Aorta (tissue), 5 donors: ENCODE measurements at regions of chr11 and their contacts with region 1.

Region 1: GRCh38 chr11:57530596-57531507 is at the start of gene TIMM10:
- DNase-seq: peak; percentile 96 to 97
- ATAC-seq: peak; percentile 96
- H3K4me3 ChIP-seq: peak within 1 kb of the TSS; percentile 62 to 63
- H3K27ac ChIP-seq: no peak within 1 kb of the TSS
- H3K4me1 ChIP-seq: no peaks in the 10 kb centered on the region
- H3K27me3 ChIP-seq: no peaks in the 10 kb centered on the region
- total RNA-seq, gene TIMM10: 30.8 to 40.0 TPM

Region 2: DNA sequence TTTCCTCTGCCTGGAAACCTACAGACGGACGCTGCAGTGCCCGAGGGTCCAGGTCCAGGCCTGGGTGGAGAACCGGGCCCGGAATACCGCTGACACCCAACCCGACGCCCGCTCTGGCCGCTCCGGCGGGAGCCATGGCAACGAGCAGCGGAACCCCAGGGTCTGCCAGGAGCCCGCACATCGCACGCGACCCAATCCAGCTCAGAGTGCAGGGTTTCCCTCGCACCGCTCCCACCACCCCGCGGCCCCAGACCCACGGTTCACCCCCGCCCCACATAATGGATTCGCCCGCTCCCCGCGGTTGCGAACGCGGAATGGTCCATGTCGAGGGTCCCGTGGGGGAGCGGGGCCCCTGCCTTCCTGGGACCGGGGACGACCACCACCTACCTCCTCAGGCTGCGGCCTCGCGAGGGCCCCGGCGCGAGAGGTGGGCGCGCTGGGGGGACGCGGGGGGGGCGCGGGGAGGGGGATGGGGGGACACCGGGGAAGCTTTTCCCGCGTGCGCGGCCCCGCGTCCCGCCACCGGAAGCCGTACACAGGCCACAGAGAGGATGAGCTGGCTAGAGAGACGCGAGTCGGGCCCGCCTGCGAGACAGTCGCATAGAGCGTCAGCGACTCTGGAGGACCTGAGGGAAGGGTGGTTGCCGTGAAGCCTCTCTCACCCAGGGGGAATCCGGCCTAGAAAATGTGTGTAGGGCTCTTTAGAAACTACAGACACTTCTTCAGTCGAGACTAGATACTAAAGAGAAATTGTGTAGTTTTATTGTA is 195.3 kb before region 1 on chr11 and contains the start of gene SSRP1:
- intact Hi-C with region 1: loop called (anchors 5 kb)
- DNase-seq: peak; percentile 93 to 95
- ATAC-seq: peak; percentile 95
- H3K4me3 ChIP-seq: peak within 1 kb of the TSS; percentile 60 to 98
- H3K27ac ChIP-seq: peak within 1 kb of the TSS in 1 of 2 donors; percentile 62
- H3K4me1 ChIP-seq: peaks cover 0 to 2% of the 10 kb centered on the region in 2 donors
- H3K27me3 ChIP-seq: no peaks in the 10 kb centered on the region
- total RNA-seq, gene SSRP1: 43.2 to 48.7 TPM

Region 3: DNA sequence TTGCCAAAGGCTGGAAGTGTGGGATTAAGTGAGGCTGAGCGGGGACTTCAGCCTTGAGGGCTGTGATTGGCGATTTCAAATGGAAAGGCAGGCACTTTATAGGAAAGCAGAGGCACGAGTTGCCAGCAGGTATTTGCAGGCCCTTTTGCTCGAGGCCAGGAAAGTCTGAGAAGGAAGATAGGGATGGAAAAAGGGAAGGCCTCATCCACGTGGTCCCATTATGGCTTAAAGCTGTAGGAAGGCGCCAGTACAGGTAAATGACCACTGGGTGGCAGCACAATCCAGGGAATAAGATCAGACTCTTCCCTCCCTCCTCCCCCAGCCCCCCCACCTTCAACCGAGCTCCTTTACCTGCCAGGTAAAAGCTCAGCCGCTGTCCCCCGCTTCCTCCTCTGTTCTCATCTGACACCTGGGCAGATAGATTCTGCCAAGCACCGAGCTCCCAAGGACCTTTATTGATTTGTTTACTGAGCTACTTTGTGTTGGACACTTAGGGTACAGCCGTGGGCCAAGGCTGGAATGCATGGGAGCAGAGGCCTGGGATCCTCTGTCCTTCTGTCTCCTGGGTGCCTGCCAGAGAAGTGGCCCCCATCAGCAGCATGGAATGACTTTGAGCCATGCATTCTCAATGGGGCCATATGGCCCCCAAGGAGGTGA is 185.2 kb before region 1 on chr11:
- intact Hi-C with region 1: loop called (anchors 5 kb)
- DNase-seq: peak; percentile 69 to 81
- ATAC-seq: peak; percentile 74
- H3K4me3 ChIP-seq: no peak overlapping the region
- H3K27ac ChIP-seq: no peak overlapping the region
- H3K4me1 ChIP-seq: no peaks in the 10 kb centered on the region
- H3K27me3 ChIP-seq: no peaks in the 10 kb centered on the region

Region 4: GRCh38 chr11:57456960-57457642 is 73.8 kb before region 1 on chr11:
- intact Hi-C with region 1: loop called (anchors 1 to 5 kb)
- DNase-seq: peak; percentile 92 to 96
- ATAC-seq: peak; percentile 93
- H3K4me3 ChIP-seq: no peak overlapping the region
- H3K27ac ChIP-seq: no peak overlapping the region
- H3K4me1 ChIP-seq: no peaks in the 10 kb centered on the region
- H3K27me3 ChIP-seq: no peaks in the 10 kb centered on the region

Region 5: GRCh38 chr11:57493507-57494503 is 37.0 kb before region 1 on chr11:
- intact Hi-C with region 1: loop called (anchors 2 kb)
- DNase-seq: peak in 1 of 2 donors; percentile 85
- ATAC-seq: peak; percentile 69
- H3K4me3 ChIP-seq: no peak overlapping the region
- H3K27ac ChIP-seq: no peak overlapping the region
- H3K4me1 ChIP-seq: no peaks in the 10 kb centered on the region
- H3K27me3 ChIP-seq: no peaks in the 10 kb centered on the region

Region 6: DNA sequence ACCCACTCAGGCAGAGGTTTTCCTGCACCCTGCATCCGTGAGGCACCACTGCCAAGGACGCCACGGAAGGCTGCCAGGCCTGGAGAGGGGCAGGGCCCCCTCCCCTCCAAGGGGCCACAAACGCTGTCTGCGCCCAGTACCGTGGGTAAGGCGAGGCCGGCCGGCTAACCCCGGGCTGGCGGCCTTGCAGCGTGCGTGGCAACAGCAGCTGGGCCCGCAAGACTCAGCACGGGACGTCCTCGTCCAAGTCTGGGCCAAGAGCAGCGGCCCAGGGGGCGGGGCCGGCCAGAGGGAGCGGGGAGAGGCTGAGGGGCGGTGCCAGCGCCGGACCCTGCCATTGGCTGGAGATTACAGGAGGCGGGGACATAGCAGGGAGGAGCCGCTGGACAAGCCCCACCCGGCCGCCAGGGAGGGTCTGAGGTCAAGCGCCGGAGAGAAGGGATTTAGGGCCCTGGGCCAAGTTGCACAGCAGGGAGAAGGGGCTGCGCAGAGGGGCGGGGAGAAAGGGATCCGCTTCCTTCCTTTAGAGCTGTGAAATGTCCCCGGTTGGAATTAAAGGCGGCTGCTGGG is 31.4 kb before region 1 on chr11:
- intact Hi-C with region 1: loop called in 1 of 2 experiments (anchors 2 kb)
- DNase-seq: peak; percentile 97 to 98
- ATAC-seq: peak; percentile 98
- H3K4me3 ChIP-seq: no peak overlapping the region
- H3K27ac ChIP-seq: peak overlapping the region in 1 of 2 donors; percentile 64
- H3K4me1 ChIP-seq: no peaks in the 10 kb centered on the region
- H3K27me3 ChIP-seq: no peaks in the 10 kb centered on the region

Region 7: DNA sequence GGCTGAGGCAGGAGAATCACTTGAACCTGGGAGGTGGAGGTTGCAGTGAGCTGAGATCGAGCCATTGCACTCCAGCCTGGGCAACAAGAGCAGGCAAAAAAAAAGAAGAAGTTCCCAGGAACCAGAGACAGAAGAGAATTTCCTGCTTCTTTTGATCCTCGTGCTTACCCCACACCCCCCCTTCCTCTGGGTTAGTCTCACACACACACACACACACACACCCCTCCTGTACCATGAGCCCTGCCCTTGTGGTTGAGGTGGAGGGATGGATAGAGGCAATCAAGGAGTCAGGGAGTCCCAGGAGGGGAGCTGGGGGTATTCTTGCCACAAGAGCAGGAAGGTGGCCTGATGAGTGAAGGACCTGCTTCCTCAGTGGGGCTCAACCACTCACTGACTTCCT is 40.8 kb after region 1 on chr11:
- intact Hi-C with region 1: no loop called
- DNase-seq: no peak
- ATAC-seq: no peak
- H3K4me3 ChIP-seq: no peak overlapping the region
- H3K27ac ChIP-seq: no peak overlapping the region
- H3K4me1 ChIP-seq: no peaks in the 10 kb centered on the region
- H3K27me3 ChIP-seq: no peaks in the 10 kb centered on the region

Region 8: GRCh38 chr11:57657194-57658022 is 126.6 kb after region 1 on chr11 and contains the start of gene CLP1:
- intact Hi-C with region 1: loop called in 1 of 2 experiments (anchors 2 kb)
- DNase-seq: peak; percentile 100
- ATAC-seq: peak; percentile 99
- H3K4me3 ChIP-seq: peak within 1 kb of the TSS; percentile 46 to 76
- H3K27ac ChIP-seq: peak within 1 kb of the TSS in 1 of 2 donors; percentile 81
- H3K4me1 ChIP-seq: no peaks in the 10 kb centered on the region
- H3K27me3 ChIP-seq: no peaks in the 10 kb centered on the region
- total RNA-seq, gene CLP1: 10.0 to 10.6 TPM